Vagina (tissue), 2 donors: ENCODE measurements at regions of chr6 and their contacts with region 1.

Region 1: GRCh38 chr6:151323791-151324487 is 67.4 kb downstream of the ZBTB2 start:
- DNase-seq: peak in 1 of 2 donors; percentile 97
- H3K4me3 ChIP-seq: no peak overlapping the region
- H3K27ac ChIP-seq: peak overlapping the region; percentile 42
- H3K4me1 ChIP-seq: peaks cover 20% of the 10 kb centered on the region
- H3K27me3 ChIP-seq: no peaks in the 10 kb centered on the region
- CTCF ChIP-seq: peak; percentile 89 to 98 (median 93)
- POLR2A ChIP-seq: no peak

Region 2: GRCh38 chr6:150301846-150302519 is 1022.0 kb before region 1 on chr6:
- intact Hi-C with region 1: no loop called
- DNase-seq: no peak
- H3K4me3 ChIP-seq: no peak overlapping the region
- H3K27ac ChIP-seq: no peak overlapping the region
- H3K4me1 ChIP-seq: no peaks in the 10 kb centered on the region
- H3K27me3 ChIP-seq: no peaks in the 10 kb centered on the region
- CTCF ChIP-seq: no peak
- POLR2A ChIP-seq: no peak

Region 3: DNA sequence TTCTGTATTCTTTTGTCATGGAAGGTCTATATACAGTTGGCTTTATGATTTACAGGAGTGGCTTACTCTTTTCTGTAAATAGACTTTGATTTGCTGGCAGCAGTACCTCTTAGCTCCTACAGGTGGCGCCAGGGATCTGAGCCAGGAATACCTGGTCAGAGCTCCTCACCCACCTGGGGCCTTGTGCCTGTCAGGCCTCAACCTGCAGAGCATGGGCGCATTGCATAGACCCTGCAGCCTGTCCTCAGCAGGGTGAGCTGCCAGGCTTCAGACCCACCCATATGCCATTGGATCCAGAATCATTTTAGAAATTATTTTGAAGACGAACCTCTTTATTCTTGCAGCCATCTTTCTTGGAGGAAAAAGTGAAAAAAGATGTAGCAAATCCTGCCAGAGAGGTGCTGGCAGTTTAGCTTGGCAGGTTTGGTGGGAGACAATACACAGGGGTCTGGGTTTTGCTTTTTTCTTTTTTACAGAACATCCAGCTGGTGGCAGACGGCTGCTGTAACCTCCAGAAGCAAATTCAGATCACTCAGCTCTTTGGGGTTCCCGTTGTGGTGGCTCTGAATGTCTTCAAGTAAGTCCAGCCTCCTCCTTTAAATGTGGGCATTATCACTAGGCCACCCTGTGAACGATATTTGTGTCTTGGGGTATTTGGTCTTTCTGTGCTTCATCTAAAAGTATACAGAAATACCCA is 309.4 kb before region 1 on chr6:
- intact Hi-C with region 1: loop called (anchors 5 kb)
- DNase-seq: no peak
- H3K4me3 ChIP-seq: no peak overlapping the region
- H3K27ac ChIP-seq: no peak overlapping the region
- H3K4me1 ChIP-seq: no peaks in the 10 kb centered on the region
- H3K27me3 ChIP-seq: no peaks in the 10 kb centered on the region
- CTCF ChIP-seq: peak; percentile 57 to 97 (median 94)
- POLR2A ChIP-seq: no peak

Region 4: DNA sequence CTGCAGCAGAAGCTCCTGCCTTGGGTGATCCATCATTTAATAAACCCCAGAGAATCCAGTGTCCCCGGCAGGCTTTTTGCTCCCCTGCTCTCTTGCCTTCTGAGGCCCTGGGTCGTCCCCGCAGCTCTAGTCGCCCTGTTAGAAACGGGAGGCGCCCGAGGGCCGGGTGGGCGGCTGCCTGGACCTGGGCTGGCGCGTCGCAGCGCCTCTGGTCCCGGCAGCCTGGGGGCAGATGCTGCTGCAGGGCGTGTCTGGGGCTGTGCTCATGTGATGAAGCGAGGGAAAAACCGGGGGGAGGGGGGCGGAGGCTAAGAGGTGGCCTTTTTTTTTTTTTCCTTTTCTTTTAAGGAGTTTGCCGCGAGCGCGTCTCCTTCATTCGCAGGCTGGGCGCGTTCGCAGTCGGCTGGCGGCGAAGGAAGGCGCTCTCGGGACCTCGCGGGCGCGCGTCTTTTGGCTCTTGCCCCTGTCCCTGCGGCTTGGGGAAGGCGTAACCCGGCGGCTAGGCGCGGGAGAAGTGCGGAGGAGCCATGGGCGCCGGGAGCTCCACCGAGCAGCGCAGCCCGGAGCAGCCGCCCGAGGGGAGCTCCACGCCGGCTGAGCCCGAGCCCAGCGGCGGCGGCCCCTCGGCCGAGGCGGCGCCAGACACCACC is 83.8 kb before region 1 on chr6:
- intact Hi-C with region 1: loop called (anchors 5 kb)
- DNase-seq: no peak
- H3K4me3 ChIP-seq: peak overlapping the region; percentile 77 to 90
- H3K27ac ChIP-seq: peak overlapping the region; percentile 93
- H3K4me1 ChIP-seq: peaks cover 4% of the 10 kb centered on the region
- H3K27me3 ChIP-seq: no peaks in the 10 kb centered on the region
- CTCF ChIP-seq: no peak
- POLR2A ChIP-seq: peak in 1 of 2 donors; percentile 61